ENCODE measurements at regions of chr7 and their contacts with region 1.

Region 1: DNA sequence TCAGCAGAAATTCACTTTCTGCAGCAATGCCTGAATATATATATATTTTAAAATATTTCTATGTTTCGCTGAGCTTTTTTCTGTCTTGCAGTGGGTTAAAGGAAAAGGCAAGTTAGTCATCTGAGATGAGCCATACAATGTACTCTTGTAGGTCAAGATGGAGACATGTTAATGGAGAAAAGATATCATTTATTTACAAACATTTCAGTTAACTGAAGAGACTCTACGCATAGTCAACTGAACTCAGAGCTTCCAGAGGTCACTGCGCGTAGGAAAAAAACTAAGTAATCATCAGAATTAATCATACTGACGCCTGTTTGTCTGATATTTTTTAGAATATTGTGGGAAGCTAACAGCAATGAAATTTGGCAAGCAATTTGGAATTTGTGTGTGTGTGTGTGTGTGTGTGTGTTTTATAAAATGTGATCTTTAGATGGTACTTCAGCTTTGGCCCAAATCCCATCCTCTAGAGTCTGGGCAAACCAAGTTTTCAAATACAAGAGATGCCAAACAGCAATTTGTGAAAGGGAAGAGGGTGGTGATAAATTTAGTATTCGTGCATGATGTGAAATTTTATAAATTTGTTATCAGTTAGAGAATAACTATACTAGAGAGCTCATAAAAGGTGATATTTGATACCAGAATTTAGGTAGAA is 193.9 kb upstream of the AGR3 start:
- DNase-seq: no peak
- H3K4me3 ChIP-seq: no peak overlapping the region
- H3K27me3 ChIP-seq: no peaks in the 10 kb centered on the region
- CTCF ChIP-seq: no peak

Region 2: DNA sequence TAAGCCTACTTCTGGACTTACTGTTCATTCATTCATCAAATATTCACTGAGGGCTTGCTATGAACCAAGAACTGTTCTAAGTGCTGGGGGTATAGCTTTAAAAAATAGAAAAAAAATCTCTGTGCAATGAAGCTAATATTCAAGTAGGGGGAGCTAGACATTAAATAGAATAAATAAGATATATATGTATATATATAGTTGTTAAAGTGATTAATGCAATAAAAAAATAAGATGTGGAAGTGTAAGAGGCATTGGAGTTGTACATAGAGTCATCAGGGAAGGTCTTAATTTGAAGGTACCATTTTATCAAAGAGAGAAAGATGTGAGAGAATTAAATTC is 12.7 kb before region 1 on chr7:
- CTCF ChIA-PET with region 1: interaction called, 12 read pairs
- POLR2A ChIA-PET with region 1: no interaction called
- DNase-seq: no peak
- H3K4me3 ChIP-seq: no peak overlapping the region
- H3K27me3 ChIP-seq: no peaks in the 10 kb centered on the region
- CTCF ChIP-seq: 0 out of 2 replicates have a peak, but pooled peaks have one; percentile 9

Region 3: GRCh38 chr7:17095001-17095574 is 19.4 kb after region 1 on chr7:
- CTCF ChIA-PET with region 1: no interaction called
- POLR2A ChIA-PET with region 1: no interaction called
- DNase-seq: peak; percentile 97
- H3K4me3 ChIP-seq: no peak overlapping the region
- H3K27me3 ChIP-seq: no peaks in the 10 kb centered on the region
- CTCF ChIP-seq: no peak

Measured in BJ (cell line).